Common myeloid progenitor, CD34-positive (primary cell): ENCODE measurements at regions of chr1 and their contacts with region 1.

Region 1: DNA sequence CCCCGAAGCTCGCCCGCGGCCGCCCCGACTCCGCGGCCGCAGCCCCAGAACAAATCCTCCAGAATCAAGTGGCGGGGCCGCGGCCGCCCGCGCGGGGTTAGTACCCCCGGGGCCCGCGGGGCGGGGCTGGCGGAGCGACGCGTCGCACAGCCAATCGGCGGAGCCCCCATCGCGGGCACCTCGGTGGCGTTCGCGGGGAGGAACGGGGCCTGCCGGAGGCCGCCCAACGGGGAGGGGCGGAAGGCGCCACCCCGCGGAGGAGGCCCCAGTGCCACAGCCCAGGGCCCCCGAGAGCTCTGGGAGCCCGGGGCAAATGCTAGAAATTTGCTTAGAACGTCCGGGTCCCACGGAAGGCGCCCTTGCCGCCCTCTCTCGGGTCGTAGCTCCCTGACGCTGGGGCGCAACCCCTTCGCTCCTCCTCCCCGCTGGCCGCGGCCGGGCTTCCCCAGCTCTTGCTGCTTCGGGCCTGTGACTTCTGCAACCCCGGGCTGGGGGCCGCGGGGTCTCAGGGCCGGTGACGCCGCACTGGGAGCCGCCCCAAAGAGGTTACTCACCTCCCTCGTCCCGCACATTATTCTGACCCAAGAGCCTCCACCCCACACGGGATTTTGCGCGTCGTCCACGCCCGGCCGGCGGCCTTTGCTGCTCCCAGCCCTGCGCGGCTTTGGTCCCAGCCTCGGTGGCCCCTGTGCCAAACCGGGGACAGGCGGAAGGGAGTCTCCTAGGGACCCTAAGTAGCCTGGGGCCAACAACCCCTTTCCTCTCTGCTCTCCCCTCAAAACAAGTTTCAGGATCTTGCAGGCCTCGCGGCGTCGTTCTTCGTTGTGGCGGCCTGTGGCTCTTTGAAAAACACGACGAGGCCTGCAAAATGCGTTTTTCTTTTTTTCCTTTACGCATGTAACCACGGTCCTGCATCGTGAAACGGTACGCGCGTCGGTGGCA is at the start of gene RUNX3:
- DNase-seq: peak; percentile 89 to 94 (median 93)
- H3K4me3 ChIP-seq: peak within 1 kb of the TSS; percentile 76 to 95 (median 85)
- H3K27ac ChIP-seq: peak within 1 kb of the TSS; percentile 72 to 84
- H3K4me1 ChIP-seq: peaks cover 6 to 71% (median 46%) of the 10 kb centered on the region in 4 experiments
- H3K27me3 ChIP-seq: no peaks in the 10 kb centered on the region

Region 2: GRCh38 chr1:24803220-24803619 is 127.3 kb before region 1 on chr1:
- CTCF ChIA-PET with region 1: no interaction called
- POLR2A ChIA-PET with region 1: no interaction called
- DNase-seq: no peak
- H3K4me3 ChIP-seq: no peak overlapping the region
- H3K27ac ChIP-seq: no peak overlapping the region
- H3K4me1 ChIP-seq: peaks cover 0 to 19% (median 6%) of the 10 kb centered on the region in 4 experiments
- H3K27me3 ChIP-seq: no peaks in the 10 kb centered on the region

Region 3: GRCh38 chr1:24914226-24915069 is 16.0 kb before region 1 on chr1:
- CTCF ChIA-PET with region 1: interaction called, 8 read pairs
- POLR2A ChIA-PET with region 1: interaction called, 11 read pairs
- DNase-seq: peak in 2 of 3 donors; percentile 25 to 32
- H3K4me3 ChIP-seq: peak overlapping the region in 1 of 7 experiments; percentile 21
- H3K27ac ChIP-seq: no peak overlapping the region
- H3K4me1 ChIP-seq: peaks cover 0 to 23% (median 8%) of the 10 kb centered on the region in 4 experiments
- H3K27me3 ChIP-seq: no peaks in the 10 kb centered on the region

Region 4: DNA sequence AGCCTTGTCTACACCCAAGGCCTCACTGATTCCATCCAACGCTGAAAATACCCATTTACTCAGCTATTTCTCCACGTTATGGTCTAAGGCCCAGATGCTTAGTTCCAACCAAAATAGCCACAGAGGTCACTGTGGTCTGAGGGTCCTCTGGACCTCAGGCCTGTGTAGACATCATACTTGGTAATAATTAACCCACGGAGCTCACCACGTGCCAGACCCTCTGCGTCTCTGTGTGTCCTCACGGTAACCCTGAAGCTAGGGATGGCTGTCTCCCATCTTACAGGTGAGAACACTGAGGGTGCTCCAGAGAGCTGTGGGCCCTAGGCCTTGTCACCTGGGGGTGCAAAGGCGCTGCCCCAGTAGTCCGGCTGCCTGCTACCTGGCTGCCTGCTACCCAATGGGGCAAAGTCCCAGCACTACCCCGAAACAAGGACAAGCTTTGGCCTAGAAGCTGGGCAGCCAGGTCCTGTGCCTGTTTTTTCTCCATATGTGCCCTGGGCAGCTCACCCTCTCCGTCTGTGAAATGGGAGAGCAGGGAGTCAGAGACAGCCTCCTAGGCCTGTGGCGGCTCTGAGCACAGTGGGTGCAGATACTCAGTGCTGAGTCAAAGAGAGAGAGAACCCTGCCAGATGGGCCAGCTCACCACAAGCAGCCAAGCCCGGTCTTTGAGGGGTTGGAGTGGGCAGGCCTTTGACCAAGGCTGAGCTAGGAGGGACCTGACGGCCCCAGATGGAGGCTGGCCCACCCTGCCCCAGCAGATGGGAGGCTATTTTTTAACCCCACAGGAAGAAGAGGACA is 16.6 kb after region 1 on chr1:
- CTCF ChIA-PET with region 1: interaction called, 10 read pairs
- POLR2A ChIA-PET with region 1: no interaction called
- DNase-seq: peak in 1 of 3 donors; percentile 38
- H3K4me3 ChIP-seq: no peak overlapping the region
- H3K27ac ChIP-seq: no peak overlapping the region
- H3K4me1 ChIP-seq: peaks cover 0 to 70% (median 14%) of the 10 kb centered on the region in 4 experiments
- H3K27me3 ChIP-seq: no peaks in the 10 kb centered on the region

Region 5: GRCh38 chr1:24952413-24952841 is 22.0 kb after region 1 on chr1:
- CTCF ChIA-PET with region 1: interaction called, 10 read pairs
- POLR2A ChIA-PET with region 1: no interaction called
- DNase-seq: peak in 2 of 3 donors; percentile 29 to 30
- H3K4me3 ChIP-seq: no peak overlapping the region
- H3K27ac ChIP-seq: no peak overlapping the region
- H3K4me1 ChIP-seq: peaks cover 4 to 93% (median 45%) of the 10 kb centered on the region in 4 experiments
- H3K27me3 ChIP-seq: no peaks in the 10 kb centered on the region

Region 6: GRCh38 chr1:25022361-25023189 is 92.1 kb after region 1 on chr1:
- CTCF ChIA-PET with region 1: interaction called, 8 read pairs
- POLR2A ChIA-PET with region 1: interaction called, 12 read pairs
- DNase-seq: peak; percentile 99
- H3K4me3 ChIP-seq: peak overlapping the region in 4 of 7 experiments; percentile 4 to 57 (median 34)
- H3K27ac ChIP-seq: peak overlapping the region; percentile 97 to 98
- H3K4me1 ChIP-seq: peaks cover 15 to 95% (median 91%) of the 10 kb centered on the region in 4 experiments
- H3K27me3 ChIP-seq: no peaks in the 10 kb centered on the region

Region 7: DNA sequence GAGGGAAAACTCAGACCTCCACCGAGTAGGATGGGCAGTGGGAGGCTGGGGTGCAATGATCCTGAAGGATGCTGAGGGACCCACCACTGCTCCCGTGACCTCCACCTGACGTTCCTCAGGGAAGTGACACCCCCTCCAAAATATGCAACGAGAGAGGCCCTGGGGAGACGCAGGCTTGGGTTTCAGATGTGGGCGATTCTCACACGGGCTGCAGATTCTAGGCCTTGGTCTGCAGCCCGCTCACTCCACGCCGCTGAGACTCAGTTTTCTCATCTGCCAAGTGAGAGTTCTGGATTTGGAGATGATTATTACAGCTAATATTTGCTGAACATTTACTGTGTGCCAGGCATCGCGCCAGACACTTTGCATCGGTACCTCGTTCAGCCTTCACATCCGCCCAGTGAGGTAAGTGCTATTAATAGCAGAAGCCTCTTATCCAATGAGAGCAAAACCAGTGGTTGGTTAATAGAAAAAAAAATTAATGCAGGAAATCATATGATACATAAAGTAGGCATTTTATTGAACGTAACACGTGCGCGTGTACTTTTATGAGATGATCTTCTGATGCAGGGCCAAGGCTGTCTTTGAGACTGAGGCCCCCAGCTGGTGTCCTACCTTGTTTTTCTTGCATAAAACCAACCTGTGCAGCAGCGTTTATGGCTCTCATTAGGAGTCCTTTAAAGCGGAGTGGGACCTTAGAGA is 101.6 kb after region 1 on chr1:
- CTCF ChIA-PET with region 1: interaction called, 24 read pairs
- POLR2A ChIA-PET with region 1: interaction called, 19 read pairs
- DNase-seq: peak; percentile 72 to 91 (median 88)
- H3K4me3 ChIP-seq: peak overlapping the region in 1 of 7 experiments; percentile 7
- H3K27ac ChIP-seq: peak overlapping the region; percentile 67 to 83
- H3K4me1 ChIP-seq: peaks cover 20 to 99% (median 94%) of the 10 kb centered on the region in 4 experiments
- H3K27me3 ChIP-seq: no peaks in the 10 kb centered on the region

Region 8: GRCh38 chr1:25099343-25099951 is 169.0 kb after region 1 on chr1:
- CTCF ChIA-PET with region 1: interaction called, 14 read pairs
- POLR2A ChIA-PET with region 1: interaction called, 3 read pairs
- DNase-seq: peak in 2 of 3 donors; percentile 76 to 81
- H3K4me3 ChIP-seq: peak overlapping the region in 1 of 7 experiments; percentile 19
- H3K27ac ChIP-seq: no peak overlapping the region
- H3K4me1 ChIP-seq: peaks cover 13 to 88% (median 38%) of the 10 kb centered on the region in 4 experiments
- H3K27me3 ChIP-seq: no peaks in the 10 kb centered on the region

Region 9: GRCh38 chr1:25217598-25218232 is 287.2 kb after region 1 on chr1:
- CTCF ChIA-PET with region 1: no interaction called
- POLR2A ChIA-PET with region 1: no interaction called
- DNase-seq: no peak
- H3K4me3 ChIP-seq: no peak overlapping the region
- H3K27ac ChIP-seq: peak overlapping the region in 1 of 2 experiments; percentile 17
- H3K4me1 ChIP-seq: peaks cover 0 to 14% (median 12%) of the 10 kb centered on the region in 4 experiments
- H3K27me3 ChIP-seq: no peaks in the 10 kb centered on the region